ENCODE measurements at regions of chr6 and their contacts with region 1.

Region 1: GRCh38 chr6:37257634-37258404 is at the starts of genes TBC1D22B and TMEM217:
- DNase-seq: peak; percentile 90 to 97 (median 94)
- ATAC-seq: peak; percentile 99
- H3K4me3 ChIP-seq: peak within 1 kb of the TSS; percentile 82
- H3K4me3 Mint-ChIP-seq: peak within 1 kb of the TSS; percentile 84
- H3K27ac ChIP-seq: peak within 1 kb of the TSS; percentile 86 to 92
- H3K27ac Mint-ChIP-seq: peak within 1 kb of the TSS; percentile 73
- H3K4me1 ChIP-seq: peaks cover 21% of the 10 kb centered on the region
- H3K4me1 Mint-ChIP-seq: peaks cover 46% of the 10 kb centered on the region
- H3K27me3 ChIP-seq: no peaks in the 10 kb centered on the region
- H3K27me3 Mint-ChIP-seq: no peaks in the 10 kb centered on the region
- CTCF ChIP-seq: no peak
- total RNA-seq, gene TBC1D22B: 5.9 to 6.6 TPM
- total RNA-seq, gene TMEM217: 0.41 to 0.47 TPM

Region 2: DNA sequence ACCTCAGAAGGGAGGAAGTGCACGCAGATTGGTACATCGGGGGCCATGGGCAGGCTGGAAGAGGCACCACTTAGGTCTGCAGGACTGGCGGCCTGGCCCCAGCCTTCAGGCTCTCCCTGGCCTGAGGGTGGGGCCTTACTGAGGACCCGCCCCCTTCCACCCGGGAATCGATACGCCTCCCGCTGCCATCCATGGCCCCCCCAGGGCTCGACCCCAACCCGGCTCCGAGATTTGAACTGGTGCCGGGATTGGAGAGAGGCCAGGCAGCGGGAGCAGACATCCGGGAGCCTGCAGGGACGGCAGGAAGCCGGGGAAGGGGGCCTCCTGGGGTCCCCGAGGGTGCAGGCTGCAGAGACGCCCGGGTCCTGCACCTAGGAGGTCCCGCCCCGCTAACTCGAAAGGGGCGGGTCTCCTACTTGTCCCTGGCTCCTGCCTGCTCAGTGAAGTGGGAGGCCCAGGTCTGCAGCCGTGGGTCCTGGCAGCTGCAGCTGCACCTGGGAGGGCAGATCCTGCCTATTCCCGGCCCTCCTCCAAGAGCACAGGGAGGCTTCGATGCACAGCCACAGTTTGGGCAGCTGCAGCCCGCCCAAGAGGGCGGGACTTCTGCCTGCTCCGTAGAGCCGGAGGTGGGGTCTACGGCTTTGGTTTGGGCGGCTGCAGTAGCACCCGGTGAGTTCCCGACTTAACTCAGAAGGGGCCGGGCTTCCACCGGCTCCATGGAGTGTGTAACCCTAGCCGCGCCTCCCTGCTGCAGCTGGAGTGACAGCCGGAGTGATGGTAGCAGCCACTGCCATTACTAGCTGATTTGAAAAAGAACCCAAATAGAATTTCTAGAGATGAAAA is 35.5 kb before region 1 on chr6:
- CTCF ChIA-PET with region 1: no interaction called
- POLR2A ChIA-PET with region 1: interaction called, 4 read pairs
- intact Hi-C with region 1: loop called in 1 of 2 experiments (anchors 5 kb)
- DNase-seq: peak; percentile 40 to 87 (median 60)
- ATAC-seq: peak; percentile 95
- H3K4me3 ChIP-seq: peak overlapping the region; percentile 85
- H3K4me3 Mint-ChIP-seq: peak overlapping the region; percentile 90
- H3K27ac ChIP-seq: no peak overlapping the region
- H3K27ac Mint-ChIP-seq: no peak overlapping the region
- H3K4me1 ChIP-seq: peaks cover 13% of the 10 kb centered on the region
- H3K4me1 Mint-ChIP-seq: peaks cover 14% of the 10 kb centered on the region
- H3K27me3 ChIP-seq: no peaks in the 10 kb centered on the region
- H3K27me3 Mint-ChIP-seq: no peaks in the 10 kb centered on the region
- CTCF ChIP-seq: no peak

Region 3: DNA sequence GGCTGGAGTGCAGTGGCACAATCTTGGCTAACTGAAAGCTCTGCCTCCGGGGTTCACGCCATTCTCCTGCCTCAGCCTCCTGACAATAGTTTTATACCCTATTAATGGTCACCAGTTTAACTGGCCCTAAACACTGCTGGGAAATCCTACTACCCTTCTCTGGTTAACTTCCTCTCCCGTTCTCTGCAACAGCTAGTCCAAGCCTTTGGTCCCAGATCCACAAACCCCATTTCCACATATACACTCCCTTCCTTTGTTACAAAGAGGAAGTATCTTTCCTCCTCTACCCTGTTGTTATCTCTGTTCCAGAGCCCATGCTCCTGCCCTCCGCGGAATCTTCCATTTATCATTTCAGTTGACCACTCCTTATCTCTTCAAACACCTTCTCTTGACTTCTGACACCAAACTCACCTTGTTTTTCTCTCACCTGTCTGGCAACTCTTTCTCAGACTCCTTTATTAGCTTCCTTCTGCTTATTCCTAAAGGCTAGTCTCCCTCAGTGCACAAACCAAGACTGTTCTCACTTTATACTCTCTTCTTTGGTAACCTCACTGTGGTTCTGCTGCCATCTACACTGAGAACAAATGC is 25.3 kb before region 1 on chr6:
- CTCF ChIA-PET with region 1: no interaction called
- POLR2A ChIA-PET with region 1: no interaction called
- intact Hi-C with region 1: no loop called
- DNase-seq: no peak
- ATAC-seq: no peak
- H3K4me3 ChIP-seq: no peak overlapping the region
- H3K4me3 Mint-ChIP-seq: no peak overlapping the region
- H3K27ac ChIP-seq: no peak overlapping the region
- H3K27ac Mint-ChIP-seq: no peak overlapping the region
- H3K4me1 ChIP-seq: no peaks in the 10 kb centered on the region
- H3K4me1 Mint-ChIP-seq: no peaks in the 10 kb centered on the region
- H3K27me3 ChIP-seq: no peaks in the 10 kb centered on the region
- H3K27me3 Mint-ChIP-seq: no peaks in the 10 kb centered on the region
- CTCF ChIP-seq: no peak

Region 4: DNA sequence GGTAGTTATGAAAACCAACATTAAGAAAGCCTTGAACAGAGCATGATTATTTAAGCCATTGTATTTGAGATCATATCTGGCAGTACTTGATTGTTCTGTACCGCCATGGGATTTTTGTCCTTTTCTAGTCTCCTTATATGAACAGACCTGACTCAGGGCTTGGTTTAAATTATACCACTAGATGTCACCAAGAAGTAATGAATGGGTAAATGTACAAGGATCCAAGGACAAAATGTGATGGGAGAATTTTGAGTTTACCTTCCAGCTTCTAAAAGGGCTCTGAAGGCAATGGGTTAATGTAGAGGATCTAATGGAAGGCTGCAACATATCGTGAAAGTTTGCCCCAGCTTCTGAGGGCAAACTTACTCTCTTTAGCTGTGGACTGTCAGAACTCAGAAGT is 107.9 kb after region 1 on chr6:
- CTCF ChIA-PET with region 1: no interaction called
- POLR2A ChIA-PET with region 1: no interaction called
- intact Hi-C with region 1: no loop called
- DNase-seq: no peak
- ATAC-seq: no peak
- H3K4me3 ChIP-seq: no peak overlapping the region
- H3K4me3 Mint-ChIP-seq: no peak overlapping the region
- H3K27ac ChIP-seq: no peak overlapping the region
- H3K27ac Mint-ChIP-seq: no peak overlapping the region
- H3K4me1 ChIP-seq: no peaks in the 10 kb centered on the region
- H3K4me1 Mint-ChIP-seq: peaks cover 5% of the 10 kb centered on the region
- H3K27me3 ChIP-seq: no peaks in the 10 kb centered on the region
- H3K27me3 Mint-ChIP-seq: no peaks in the 10 kb centered on the region
- CTCF ChIP-seq: no peak

Measured in CD4-positive, alpha-beta T cell (primary cell).